ENCODE measurements at regions of chr7 and their contacts with region 1.

Region 1: GRCh38 chr7:28853834-28854749 is 104.0 kb downstream of the TRIL start:
- DNase-seq: peak; percentile 87
- ATAC-seq: peak; percentile 70
- H3K4me3 ChIP-seq: peak overlapping the region; percentile 75
- H3K27ac ChIP-seq: no peak overlapping the region
- H3K4me1 ChIP-seq: peaks cover 47% of the 10 kb centered on the region
- H3K27me3 ChIP-seq: no peaks in the 10 kb centered on the region
- CTCF ChIP-seq: peak; percentile 83

Region 2: DNA sequence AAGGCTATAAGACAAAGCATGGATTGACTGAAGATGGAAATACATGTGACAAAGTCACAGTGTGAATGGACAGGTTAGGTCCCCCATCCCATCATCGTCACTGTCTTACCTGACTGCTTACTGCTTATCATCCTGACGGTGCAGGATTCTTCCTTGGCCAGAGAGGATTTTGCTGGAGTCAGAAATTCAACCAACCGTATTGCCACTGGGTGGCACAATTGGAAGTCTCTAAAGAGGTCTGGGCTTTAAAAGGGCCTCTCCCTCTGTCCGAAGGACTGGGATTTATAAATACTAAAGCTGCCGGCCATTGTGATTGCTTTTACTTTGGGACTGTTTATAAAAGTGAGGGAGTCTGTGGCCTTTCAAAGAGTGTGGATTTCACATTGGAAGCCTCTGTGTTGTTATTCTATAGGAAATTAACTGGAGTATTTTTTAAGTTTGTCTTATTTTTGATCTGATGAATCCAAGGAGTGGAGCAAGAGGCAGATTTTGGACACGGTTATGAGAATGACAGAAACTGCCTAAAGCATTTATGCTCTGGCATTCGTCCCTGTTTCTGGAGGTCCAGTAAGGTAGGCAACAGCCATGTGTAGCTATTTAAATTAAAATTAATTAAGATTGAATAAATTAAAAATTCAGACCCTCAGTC is 555.1 kb before region 1 on chr7:
- CTCF ChIA-PET with region 1: no interaction called
- POLR2A ChIA-PET with region 1: no interaction called
- intact Hi-C with region 1: loop called (anchors 1 kb)
- DNase-seq: peak; percentile 85
- ATAC-seq: peak; percentile 94
- H3K4me3 ChIP-seq: no peak overlapping the region
- H3K27ac ChIP-seq: 0 out of 2 replicates have a peak overlapping the region, but pooled peaks have one; percentile 13
- H3K4me1 ChIP-seq: peaks cover 13% of the 10 kb centered on the region
- H3K27me3 ChIP-seq: no peaks in the 10 kb centered on the region
- CTCF ChIP-seq: peak; percentile 82

Region 3: DNA sequence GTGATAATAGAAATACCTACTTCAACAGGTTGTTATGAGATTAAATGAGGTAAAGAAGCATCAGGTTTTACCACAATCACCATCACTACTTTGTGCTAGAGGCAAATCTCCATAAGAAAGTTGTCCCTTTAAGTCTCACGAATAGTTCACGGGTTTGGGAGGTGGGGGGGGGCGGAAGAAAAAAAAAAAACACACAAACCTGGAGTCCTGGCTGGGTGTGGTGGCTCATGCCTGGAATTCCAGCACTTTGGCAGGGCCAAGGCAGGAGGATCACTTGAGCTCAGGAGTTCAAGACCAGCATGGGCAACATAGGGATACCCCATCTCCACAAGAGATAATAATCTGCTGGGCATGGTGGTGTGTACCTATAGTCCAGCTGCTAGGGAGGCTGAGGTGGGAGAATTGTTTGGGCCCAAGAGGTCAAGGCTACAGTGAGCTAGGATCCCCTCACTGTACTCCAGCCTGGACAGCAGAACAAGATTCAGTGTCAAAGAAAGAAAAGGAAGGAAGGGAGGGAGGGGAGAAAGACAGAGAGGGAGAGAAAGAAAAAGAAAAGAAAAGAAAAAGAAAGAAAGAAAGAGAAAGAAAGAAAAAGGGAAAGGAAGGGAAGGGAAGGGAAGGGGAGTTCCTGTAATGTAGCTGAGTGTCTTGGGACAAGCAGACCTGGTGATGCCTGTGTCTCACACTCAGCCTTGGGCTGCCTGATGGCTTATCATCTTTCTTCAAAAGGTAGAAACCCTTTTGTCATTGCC is 210.3 kb before region 1 on chr7:
- CTCF ChIA-PET with region 1: interaction called, 3 read pairs
- POLR2A ChIA-PET with region 1: no interaction called
- intact Hi-C with region 1: loop called (anchors 5 kb)
- DNase-seq: no peak
- ATAC-seq: no peak
- H3K4me3 ChIP-seq: no peak overlapping the region
- H3K27ac ChIP-seq: no peak overlapping the region
- H3K4me1 ChIP-seq: peaks cover 15% of the 10 kb centered on the region
- H3K27me3 ChIP-seq: no peaks in the 10 kb centered on the region
- CTCF ChIP-seq: no peak

Region 4: GRCh38 chr7:28685644-28686417 is 168.3 kb before region 1 on chr7:
- CTCF ChIA-PET with region 1: no interaction called
- POLR2A ChIA-PET with region 1: no interaction called
- intact Hi-C with region 1: loop called (anchors 5 kb)
- DNase-seq: peak; percentile 97
- ATAC-seq: peak; percentile 89
- H3K4me3 ChIP-seq: peak overlapping the region; percentile 77
- H3K27ac ChIP-seq: peak overlapping the region; percentile 78
- H3K4me1 ChIP-seq: peaks cover 31% of the 10 kb centered on the region
- H3K27me3 ChIP-seq: no peaks in the 10 kb centered on the region
- CTCF ChIP-seq: no peak

Region 5: DNA sequence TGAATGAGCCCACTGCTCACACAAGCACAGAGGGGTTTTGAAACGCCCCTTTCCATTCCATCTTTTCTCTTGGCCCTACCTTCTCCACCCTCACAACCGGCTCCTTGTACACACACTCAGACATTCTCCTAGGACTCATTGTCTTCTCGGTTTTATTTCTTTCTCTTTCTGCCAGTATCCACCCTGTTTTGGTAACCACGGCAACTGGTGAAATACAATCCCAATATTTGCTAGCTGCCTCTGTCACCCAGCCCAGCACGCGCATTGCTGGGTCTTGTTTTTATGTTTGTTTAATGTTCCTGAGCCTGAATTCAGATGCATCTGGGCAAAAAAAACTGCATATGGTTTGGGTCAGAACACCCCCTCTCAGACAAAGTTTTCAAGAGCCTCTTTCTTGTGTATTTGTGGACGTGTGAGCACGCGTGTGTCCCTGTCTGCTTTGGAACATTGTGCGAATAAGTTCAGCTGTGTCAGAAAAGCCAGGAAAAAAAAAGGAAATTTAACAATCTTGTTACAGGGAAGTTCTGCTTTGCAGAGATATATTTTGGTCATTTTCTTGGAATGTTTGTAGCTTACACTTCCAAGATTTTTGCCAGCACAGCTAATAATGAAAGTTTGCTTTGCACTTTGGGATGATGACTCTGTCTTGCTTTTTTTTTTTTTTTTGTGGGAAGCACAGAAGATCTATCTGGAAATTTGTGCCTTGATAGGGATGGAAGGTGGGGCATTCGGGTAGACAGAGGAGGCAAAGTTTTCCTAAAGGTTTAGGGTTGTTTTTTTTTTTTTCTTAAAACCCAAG is 121.8 kb before region 1 on chr7:
- CTCF ChIA-PET with region 1: no interaction called
- POLR2A ChIA-PET with region 1: no interaction called
- intact Hi-C with region 1: loop called (anchors 1 kb)
- DNase-seq: peak; percentile 46
- ATAC-seq: peak; percentile 38
- H3K4me3 ChIP-seq: no peak overlapping the region
- H3K27ac ChIP-seq: no peak overlapping the region
- H3K4me1 ChIP-seq: peaks cover 38% of the 10 kb centered on the region
- H3K27me3 ChIP-seq: no peaks in the 10 kb centered on the region
- CTCF ChIP-seq: no peak

Region 6: DNA sequence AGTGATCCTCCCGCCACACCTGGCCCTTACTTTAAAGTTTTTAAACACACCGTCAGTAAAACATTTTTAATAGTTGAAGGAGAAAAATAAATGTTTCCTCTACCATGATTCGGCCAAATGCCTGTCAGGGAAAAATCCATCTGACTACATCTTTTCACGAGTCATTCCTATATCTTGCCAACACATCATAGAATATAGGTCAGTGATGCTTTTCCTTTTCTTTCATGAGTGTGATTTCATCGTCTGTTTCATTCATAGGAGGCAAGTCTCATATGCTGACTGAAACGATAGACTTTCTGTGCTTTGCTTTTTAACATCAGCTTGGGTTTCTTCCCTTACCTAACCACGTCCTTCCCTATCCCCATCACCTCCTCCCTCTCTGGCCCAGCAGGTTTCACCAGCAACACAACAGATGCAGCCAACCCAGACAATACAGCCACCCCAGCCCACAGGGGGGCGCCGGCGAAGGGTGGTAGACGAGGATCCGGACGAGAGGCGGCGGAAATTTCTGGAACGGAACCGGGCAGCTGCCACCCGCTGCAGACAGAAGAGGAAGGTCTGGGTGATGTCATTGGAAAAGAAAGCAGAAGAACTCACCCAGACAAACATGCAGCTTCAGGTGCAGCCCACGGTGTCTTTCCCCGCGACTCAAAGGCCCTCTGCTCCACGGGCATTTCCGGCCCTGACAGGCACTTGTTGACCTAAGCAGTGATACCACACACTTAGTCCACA is 45.1 kb before region 1 on chr7:
- CTCF ChIA-PET with region 1: interaction called, 5 read pairs
- POLR2A ChIA-PET with region 1: no interaction called
- intact Hi-C with region 1: loop called (anchors 2 kb)
- DNase-seq: peak; percentile 5
- ATAC-seq: no peak
- H3K4me3 ChIP-seq: no peak overlapping the region
- H3K27ac ChIP-seq: no peak overlapping the region
- H3K4me1 ChIP-seq: peaks cover 30% of the 10 kb centered on the region
- H3K27me3 ChIP-seq: no peaks in the 10 kb centered on the region
- CTCF ChIP-seq: no peak; the same call in 1 of the 2 replicates